ENCODE measurements at regions of chr6 and their contacts with region 1.

Region 1: GRCh38 chr6:71012866-71013469 is 56.1 kb upstream of the B3GAT2 start:
- DNase-seq: peak in 1 of 2 experiments; percentile 50
- H3K4me3 ChIP-seq: no peak overlapping the region
- H3K4me3 Mint-ChIP-seq: no peak overlapping the region
- H3K27ac Mint-ChIP-seq: no peak overlapping the region
- H3K4me1 ChIP-seq: no peaks in the 10 kb centered on the region
- H3K4me1 Mint-ChIP-seq: no peaks in the 10 kb centered on the region
- H3K27me3 ChIP-seq: no peaks in the 10 kb centered on the region
- H3K27me3 Mint-ChIP-seq: no peaks in the 10 kb centered on the region
- CTCF ChIP-seq: peak; percentile 74 to 77

Region 2: DNA sequence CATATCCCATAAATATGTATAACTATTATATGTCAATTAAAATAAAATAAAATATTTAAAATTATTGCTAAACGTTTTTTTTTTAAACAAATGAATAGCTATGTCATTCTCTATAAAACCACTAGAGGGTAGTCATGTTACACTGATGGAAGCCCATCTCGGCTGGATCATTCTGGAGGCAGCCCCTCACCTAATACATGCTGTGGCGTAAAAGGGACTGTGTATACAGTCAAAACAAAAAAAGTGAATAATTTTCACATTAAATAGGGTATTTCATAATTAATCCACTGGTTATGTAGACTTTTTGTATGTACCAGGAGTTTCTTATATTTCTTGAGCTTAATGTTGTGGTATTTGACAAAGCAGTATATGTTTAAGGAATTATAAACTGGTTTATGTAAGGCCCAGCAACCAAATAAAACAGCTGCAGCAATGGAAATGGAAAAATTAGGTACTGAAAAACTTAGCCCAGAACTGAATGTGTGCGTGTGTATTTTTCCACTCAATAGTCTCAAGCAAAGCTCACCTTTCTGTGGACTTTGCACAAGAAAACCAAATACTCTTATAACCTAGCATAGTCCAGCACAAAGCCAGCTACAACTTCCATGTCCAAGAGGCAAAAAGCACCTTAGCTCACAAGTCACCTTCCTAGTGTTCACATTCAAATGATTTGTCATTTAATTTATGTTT is 791.8 kb before region 1 on chr6:
- CTCF ChIA-PET with region 1: no interaction called
- POLR2A ChIA-PET with region 1: no interaction called
- intact Hi-C with region 1: loop called (anchors 1 kb)
- DNase-seq: peak in 1 of 2 experiments; percentile 19
- H3K4me3 ChIP-seq: no peak overlapping the region
- H3K4me3 Mint-ChIP-seq: no peak overlapping the region
- H3K27ac Mint-ChIP-seq: no peak overlapping the region
- H3K4me1 ChIP-seq: no peaks in the 10 kb centered on the region
- H3K4me1 Mint-ChIP-seq: no peaks in the 10 kb centered on the region
- H3K27me3 ChIP-seq: no peaks in the 10 kb centered on the region
- H3K27me3 Mint-ChIP-seq: peaks cover 4% of the 10 kb centered on the region
- CTCF ChIP-seq: peak; percentile 60 to 74

Region 3: DNA sequence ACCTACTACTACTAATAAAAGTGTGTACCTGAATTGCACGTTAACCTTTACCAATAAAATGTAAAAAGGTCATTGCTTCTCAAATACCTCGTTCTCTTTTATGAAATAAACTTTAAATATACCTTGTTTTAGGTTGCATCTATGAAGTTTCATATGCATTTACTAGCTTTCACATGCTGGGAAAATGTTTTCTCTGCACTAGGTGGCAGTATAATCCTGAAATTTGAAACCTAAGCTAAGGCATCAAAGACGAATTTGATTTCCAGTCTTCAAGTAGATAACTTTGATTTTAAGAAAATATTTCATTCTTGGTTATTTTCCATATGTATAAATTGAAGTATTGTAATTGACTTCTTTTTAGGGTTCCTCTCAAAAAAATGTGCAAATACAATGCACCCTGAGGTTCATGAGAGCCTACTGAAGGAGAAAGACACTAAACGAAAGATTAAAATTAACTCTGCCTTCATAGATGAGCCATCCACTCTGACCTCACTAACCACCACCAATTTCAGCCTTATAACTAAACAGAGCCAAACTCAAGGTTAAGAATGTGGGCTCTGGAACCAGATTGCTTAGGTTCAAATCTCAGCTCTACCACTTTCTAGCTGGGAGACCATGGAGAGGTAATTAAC is 702.8 kb before region 1 on chr6:
- CTCF ChIA-PET with region 1: interaction called, 4 read pairs
- POLR2A ChIA-PET with region 1: no interaction called
- intact Hi-C with region 1: loop called (anchors 2 kb)
- DNase-seq: peak in 1 of 2 experiments; percentile 39
- H3K4me3 ChIP-seq: no peak overlapping the region
- H3K4me3 Mint-ChIP-seq: no peak overlapping the region
- H3K27ac Mint-ChIP-seq: no peak overlapping the region
- H3K4me1 ChIP-seq: no peaks in the 10 kb centered on the region
- H3K4me1 Mint-ChIP-seq: peaks cover 6% of the 10 kb centered on the region
- H3K27me3 ChIP-seq: no peaks in the 10 kb centered on the region
- H3K27me3 Mint-ChIP-seq: peaks cover 13% of the 10 kb centered on the region
- CTCF ChIP-seq: peak; percentile 19 to 52

Region 4: GRCh38 chr6:70547313-70547712 is 465.7 kb before region 1 on chr6:
- CTCF ChIA-PET with region 1: no interaction called
- POLR2A ChIA-PET with region 1: no interaction called
- intact Hi-C with region 1: loop called (anchors 2 kb)
- DNase-seq: no peak
- H3K4me3 ChIP-seq: no peak overlapping the region
- H3K4me3 Mint-ChIP-seq: no peak overlapping the region
- H3K27ac Mint-ChIP-seq: no peak overlapping the region
- H3K4me1 ChIP-seq: no peaks in the 10 kb centered on the region
- H3K4me1 Mint-ChIP-seq: no peaks in the 10 kb centered on the region
- H3K27me3 ChIP-seq: no peaks in the 10 kb centered on the region
- H3K27me3 Mint-ChIP-seq: no peaks in the 10 kb centered on the region
- CTCF ChIP-seq: peak; percentile 25 to 67

Region 5: DNA sequence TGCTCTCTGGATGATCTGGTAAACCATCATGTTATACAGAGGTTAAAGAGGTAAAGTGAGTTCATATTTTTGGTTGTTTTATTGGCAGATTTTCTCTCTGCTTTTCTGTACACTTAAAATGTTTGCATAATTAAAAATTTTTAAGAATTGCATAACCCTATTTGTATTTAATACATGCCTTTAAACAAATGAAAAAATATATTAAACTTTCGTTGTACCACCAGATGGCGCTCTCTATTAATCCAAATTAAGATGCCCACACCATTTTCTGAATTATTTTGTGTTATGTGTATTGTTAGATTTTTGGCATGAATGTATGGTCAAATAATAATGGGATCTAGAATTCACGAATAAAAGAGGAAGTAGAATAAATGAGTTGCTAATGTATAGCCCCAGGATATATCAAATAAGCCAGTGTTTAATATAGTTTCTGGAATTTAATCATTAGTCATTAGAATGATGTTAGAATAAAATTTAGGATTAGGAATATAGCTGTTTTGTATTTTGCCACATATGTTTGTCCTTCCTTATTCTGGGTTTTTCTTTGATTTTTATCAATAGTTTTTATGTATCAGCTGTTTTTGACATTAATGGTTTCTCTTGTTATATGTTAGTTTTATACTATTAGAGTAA is 306.4 kb before region 1 on chr6:
- CTCF ChIA-PET with region 1: no interaction called
- POLR2A ChIA-PET with region 1: no interaction called
- intact Hi-C with region 1: loop called (anchors 2 kb)
- DNase-seq: peak in 1 of 2 experiments; percentile 23
- H3K4me3 ChIP-seq: no peak overlapping the region
- H3K4me3 Mint-ChIP-seq: no peak overlapping the region
- H3K27ac Mint-ChIP-seq: no peak overlapping the region
- H3K4me1 ChIP-seq: no peaks in the 10 kb centered on the region
- H3K4me1 Mint-ChIP-seq: peaks cover 6% of the 10 kb centered on the region
- H3K27me3 ChIP-seq: no peaks in the 10 kb centered on the region
- H3K27me3 Mint-ChIP-seq: no peaks in the 10 kb centered on the region
- CTCF ChIP-seq: peak; percentile 25 to 53

Region 6: DNA sequence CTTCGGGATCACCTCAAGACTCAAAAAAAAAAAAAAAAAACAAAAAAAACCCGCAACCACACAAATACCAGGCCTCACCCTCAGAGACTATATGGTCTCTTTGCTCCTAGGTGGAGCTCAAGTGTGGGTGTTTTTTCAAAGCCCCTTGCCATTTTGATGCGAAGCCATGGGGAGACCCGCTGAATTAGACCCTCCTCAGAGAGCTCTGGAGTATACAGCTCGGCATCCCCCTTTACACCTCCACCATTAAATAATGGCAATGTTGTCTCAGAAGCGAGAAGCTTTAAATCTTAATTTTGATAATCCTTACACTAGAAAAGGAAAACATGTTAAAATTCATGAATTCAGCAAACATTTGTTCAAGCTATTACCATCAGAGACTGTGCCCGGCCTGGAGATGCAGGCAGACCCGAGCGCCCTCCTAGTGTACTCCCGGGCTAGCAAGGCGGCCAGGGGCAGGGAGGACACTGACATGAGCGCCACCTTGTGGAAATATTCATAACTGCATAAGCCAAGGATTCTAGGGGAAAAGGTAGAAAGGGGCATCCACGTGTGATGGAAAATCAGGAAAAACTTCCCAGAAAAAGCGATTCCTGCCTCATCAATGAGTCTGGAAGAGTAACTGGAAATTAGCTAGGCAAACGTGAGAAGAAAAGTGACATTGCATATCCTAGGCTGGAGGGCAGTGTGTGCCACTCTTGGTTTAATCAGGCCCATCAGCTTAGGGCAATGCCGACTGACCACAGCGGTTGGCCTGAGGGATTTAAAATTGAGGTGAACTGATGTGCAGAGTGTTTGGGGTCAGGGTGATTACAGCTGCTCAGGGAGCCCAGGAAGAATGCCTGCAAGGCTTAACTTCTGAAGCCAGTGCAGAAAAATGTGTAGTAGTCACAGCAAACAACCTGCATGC is 128.6 kb before region 1 on chr6:
- CTCF ChIA-PET with region 1: no interaction called
- POLR2A ChIA-PET with region 1: no interaction called
- intact Hi-C with region 1: loop called (anchors 1 kb)
- DNase-seq: peak; percentile 55 to 76
- H3K4me3 ChIP-seq: no peak overlapping the region
- H3K4me3 Mint-ChIP-seq: no peak overlapping the region
- H3K27ac Mint-ChIP-seq: no peak overlapping the region
- H3K4me1 ChIP-seq: no peaks in the 10 kb centered on the region
- H3K4me1 Mint-ChIP-seq: no peaks in the 10 kb centered on the region
- H3K27me3 ChIP-seq: no peaks in the 10 kb centered on the region; the same call in 1 of the 2 replicates
- H3K27me3 Mint-ChIP-seq: peaks cover 6% of the 10 kb centered on the region
- CTCF ChIP-seq: peak; percentile 78 to 88

Region 7: GRCh38 chr6:70998148-70998547 is 14.8 kb before region 1 on chr6:
- CTCF ChIA-PET with region 1: no interaction called
- POLR2A ChIA-PET with region 1: no interaction called
- intact Hi-C with region 1: no loop called
- DNase-seq: no peak
- H3K4me3 ChIP-seq: no peak overlapping the region
- H3K4me3 Mint-ChIP-seq: no peak overlapping the region
- H3K27ac Mint-ChIP-seq: no peak overlapping the region
- H3K4me1 ChIP-seq: no peaks in the 10 kb centered on the region
- H3K4me1 Mint-ChIP-seq: no peaks in the 10 kb centered on the region
- H3K27me3 ChIP-seq: no peaks in the 10 kb centered on the region
- H3K27me3 Mint-ChIP-seq: peaks cover 17% of the 10 kb centered on the region
- CTCF ChIP-seq: no peak

Measured in Caco-2 (cell line).